Activated T-helper 1 cell treated with anti-CD3 and anti-CD28 coated beads, Interleukin-12 subunit alpha, Interleukin-12 subunit beta, Interleukin-2, Interleukin-4 antibody, amounts not matched to agents 30 ng/mL and 10 ng/mL and 1 ng/mL, durations not matched to agents 14 hours and 24 hours and 36 hours (primary cell): ENCODE measurements at regions of chr10 and their contacts with region 1.

Region 1: GRCh38 chr10:132536971-132537712 is 445 bp upstream of the INPP5A start:
- DNase-seq: peak; percentile 100
- H3K4me3 Mint-ChIP-seq: peak overlapping the region; percentile 70
- H3K27ac Mint-ChIP-seq: no peak overlapping the region
- H3K4me1 Mint-ChIP-seq: peaks cover 42% of the 10 kb centered on the region
- H3K27me3 Mint-ChIP-seq: peaks cover 7% of the 10 kb centered on the region

Region 2: GRCh38 chr10:132163278-132163765 is 373.8 kb before region 1 on chr10:
- intact Hi-C with region 1: loop called (anchors 1 kb)
- DNase-seq: peak; percentile 56
- H3K4me3 Mint-ChIP-seq: no peak overlapping the region
- H3K27ac Mint-ChIP-seq: peak overlapping the region; percentile 74
- H3K4me1 Mint-ChIP-seq: peaks cover 41% of the 10 kb centered on the region
- H3K27me3 Mint-ChIP-seq: no peaks in the 10 kb centered on the region

Region 3: GRCh38 chr10:132281915-132282666 is 255.1 kb before region 1 on chr10:
- intact Hi-C with region 1: no loop called
- DNase-seq: no peak
- H3K4me3 Mint-ChIP-seq: no peak overlapping the region
- H3K27ac Mint-ChIP-seq: no peak overlapping the region
- H3K4me1 Mint-ChIP-seq: no peaks in the 10 kb centered on the region
- H3K27me3 Mint-ChIP-seq: peaks cover 3% of the 10 kb centered on the region

Region 4: DNA sequence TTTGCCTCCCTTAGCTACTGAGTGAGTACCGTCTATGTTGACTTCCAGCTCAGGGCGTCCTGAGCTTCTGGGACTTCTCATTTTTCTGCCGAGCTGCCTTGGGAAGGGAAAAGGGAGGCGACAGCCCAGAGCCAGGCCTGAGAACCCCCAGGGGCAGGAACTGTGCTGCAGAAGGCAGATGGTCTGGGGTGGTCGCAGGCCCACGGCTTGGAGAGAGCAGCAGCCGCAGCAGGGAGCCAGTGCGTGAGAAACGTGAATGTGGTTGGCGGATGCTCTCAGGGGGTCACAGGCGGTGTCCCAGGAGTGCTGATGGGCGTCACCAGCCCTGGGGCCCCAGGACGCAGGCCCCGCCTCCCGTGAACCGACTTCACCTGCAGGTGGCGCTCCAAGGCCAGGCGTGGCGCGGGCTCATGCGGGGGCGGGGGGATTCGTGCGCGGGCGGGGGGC is 149.4 kb before region 1 on chr10:
- intact Hi-C with region 1: loop called (anchors 5 kb)
- DNase-seq: peak; percentile 63
- H3K4me3 Mint-ChIP-seq: peak overlapping the region; percentile 47
- H3K27ac Mint-ChIP-seq: peak overlapping the region; percentile 92
- H3K4me1 Mint-ChIP-seq: peaks cover 1% of the 10 kb centered on the region
- H3K27me3 Mint-ChIP-seq: peaks cover 7% of the 10 kb centered on the region

Region 5: GRCh38 chr10:132526676-132527075 is 10.5 kb before region 1 on chr10:
- intact Hi-C with region 1: no loop called
- DNase-seq: no peak
- H3K4me3 Mint-ChIP-seq: no peak overlapping the region
- H3K27ac Mint-ChIP-seq: no peak overlapping the region
- H3K4me1 Mint-ChIP-seq: no peaks in the 10 kb centered on the region
- H3K27me3 Mint-ChIP-seq: peaks cover 22% of the 10 kb centered on the region

Region 6: DNA sequence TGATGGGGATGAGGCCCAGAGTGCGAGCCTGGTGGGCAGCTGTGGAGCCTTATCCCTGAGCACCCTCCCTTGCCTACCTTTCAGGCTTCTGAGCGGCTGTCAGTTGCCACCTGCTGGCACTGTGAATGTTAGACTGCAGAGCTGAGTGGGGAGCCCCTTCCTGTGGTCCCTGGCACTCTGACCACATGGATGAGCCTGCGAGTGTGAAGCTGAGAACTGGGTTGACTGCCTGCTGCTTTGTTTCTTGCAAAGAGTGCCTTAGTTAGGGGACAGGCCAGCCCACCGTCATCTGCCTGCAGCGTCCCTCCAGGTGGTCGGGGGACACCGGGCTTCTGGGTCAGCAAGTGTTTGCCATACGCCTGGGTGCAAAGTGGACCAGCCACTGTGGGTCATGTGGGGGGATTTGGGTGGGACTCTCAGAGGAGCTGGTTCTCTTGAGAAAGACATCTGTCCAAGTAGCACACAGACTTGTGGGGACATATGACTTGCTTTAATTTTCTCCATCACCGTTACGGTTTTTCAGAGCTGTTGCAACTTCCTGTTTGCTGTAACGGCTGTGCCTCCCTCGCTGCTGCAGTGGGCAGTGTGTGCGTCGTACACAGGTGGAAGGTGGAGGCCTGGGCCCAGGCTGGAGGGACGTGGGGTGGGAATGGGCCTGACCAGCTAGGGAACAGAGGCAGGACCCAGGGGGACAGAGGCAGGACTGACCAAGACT is 14.1 kb after region 1 on chr10:
- intact Hi-C with region 1: loop called (anchors 1 kb)
- DNase-seq: no peak
- H3K4me3 Mint-ChIP-seq: peak overlapping the region; percentile 50
- H3K27ac Mint-ChIP-seq: peak overlapping the region; percentile 81
- H3K4me1 Mint-ChIP-seq: peaks cover 1% of the 10 kb centered on the region
- H3K27me3 Mint-ChIP-seq: no peaks in the 10 kb centered on the region

Region 7: DNA sequence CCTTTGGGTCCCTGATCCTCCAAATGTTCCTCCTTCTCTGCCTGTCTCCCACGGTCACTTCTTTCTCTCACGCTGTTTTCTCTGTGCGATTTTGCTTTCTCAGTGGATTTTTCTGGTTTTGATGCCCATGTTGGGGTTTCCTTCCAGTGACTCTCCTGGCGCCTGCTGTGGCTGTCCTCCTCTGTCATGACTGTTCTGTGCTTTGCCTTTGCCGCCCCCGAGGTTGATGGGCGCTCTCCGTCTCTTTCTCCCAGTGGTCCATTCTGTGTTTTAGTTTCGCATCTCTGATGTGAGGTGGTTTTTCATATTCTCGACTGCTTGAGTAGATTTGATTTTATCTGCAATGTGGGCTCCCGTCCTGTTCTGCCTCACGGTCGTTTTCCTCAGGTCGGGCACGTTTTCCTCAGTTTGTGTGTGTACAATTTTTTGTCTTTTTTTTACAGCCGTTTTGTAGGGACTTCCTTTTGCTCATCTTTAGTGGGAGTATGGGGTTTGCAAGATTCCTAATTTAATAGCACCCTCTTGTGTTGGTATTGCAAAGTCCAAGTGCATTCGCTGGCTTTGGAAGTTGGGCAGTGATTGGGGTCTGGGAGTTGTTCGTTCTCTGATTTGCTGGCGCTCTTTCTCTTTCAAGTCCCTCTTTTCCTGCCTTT is 100.5 kb after region 1 on chr10:
- intact Hi-C with region 1: loop called (anchors 5 kb)
- DNase-seq: no peak
- H3K4me3 Mint-ChIP-seq: no peak overlapping the region
- H3K27ac Mint-ChIP-seq: no peak overlapping the region
- H3K4me1 Mint-ChIP-seq: peaks cover 9% of the 10 kb centered on the region
- H3K27me3 Mint-ChIP-seq: peaks cover 8% of the 10 kb centered on the region

Region 8: GRCh38 chr10:133394064-133394663 is 857.0 kb after region 1 on chr10 and contains the start of gene MTG1:
- intact Hi-C with region 1: loop called (anchors 5 kb)
- DNase-seq: peak; percentile 96
- H3K4me3 Mint-ChIP-seq: peak within 1 kb of the TSS; percentile 99
- H3K27ac Mint-ChIP-seq: peak within 1 kb of the TSS; percentile 98
- H3K4me1 Mint-ChIP-seq: peaks cover 28% of the 10 kb centered on the region
- H3K27me3 Mint-ChIP-seq: no peaks in the 10 kb centered on the region
- total RNA-seq, gene MTG1: 64.9 and 67.9 TPM in 2 replicates